Activated CD4-positive, alpha-beta memory T cell treated with anti-CD3 and anti-CD28 coated beads for 36 hours (primary cell): ENCODE measurements at regions of chr9 and their contacts with region 1.

Region 1: DNA sequence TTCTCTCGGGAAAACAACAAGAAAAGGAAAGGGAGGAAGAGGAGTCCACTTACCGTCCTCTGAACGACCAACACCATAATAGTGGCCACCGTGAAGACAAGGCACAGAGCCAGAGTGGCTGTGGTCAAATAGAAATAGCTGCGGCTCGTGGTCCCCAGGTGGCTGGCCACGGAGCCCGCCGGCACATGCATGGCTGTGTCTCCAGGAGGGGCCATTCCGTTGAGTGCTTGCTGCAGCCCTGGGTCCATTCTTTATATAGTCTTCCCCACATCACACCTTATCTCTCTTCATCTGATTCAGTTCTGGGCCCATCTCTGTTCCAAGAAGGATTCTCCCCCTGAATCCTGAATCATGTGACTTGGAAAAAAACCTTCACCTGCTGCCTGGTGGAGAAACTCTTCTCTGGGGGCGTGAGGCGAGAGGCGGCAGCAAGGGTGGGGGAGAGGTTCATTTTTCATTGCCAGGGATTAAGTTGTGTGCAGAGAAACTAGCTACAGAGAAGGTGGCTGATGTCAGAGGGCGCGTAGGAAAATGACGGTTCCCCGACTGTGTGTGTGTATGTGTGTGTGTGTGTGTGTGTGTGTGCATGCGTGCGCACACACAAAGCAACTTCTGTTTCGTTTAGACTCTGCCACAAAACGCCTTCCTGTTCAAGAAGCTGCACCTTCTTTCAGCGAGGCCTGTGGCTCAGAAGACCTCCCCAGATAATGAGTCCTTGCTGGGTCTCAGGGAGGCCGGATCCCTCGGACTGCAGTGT is at the start of gene TNFSF8:
- DNase-seq: peak; percentile 90
- H3K4me3 Mint-ChIP-seq: peak within 1 kb of the TSS; percentile 94
- H3K27ac Mint-ChIP-seq: peak within 1 kb of the TSS; percentile 97
- H3K4me1 Mint-ChIP-seq: peaks cover 44% of the 10 kb centered on the region
- H3K27me3 Mint-ChIP-seq: no peaks in the 10 kb centered on the region
- total RNA-seq, gene TNFSF8: 37.9 to 38.7 TPM

Region 2: DNA sequence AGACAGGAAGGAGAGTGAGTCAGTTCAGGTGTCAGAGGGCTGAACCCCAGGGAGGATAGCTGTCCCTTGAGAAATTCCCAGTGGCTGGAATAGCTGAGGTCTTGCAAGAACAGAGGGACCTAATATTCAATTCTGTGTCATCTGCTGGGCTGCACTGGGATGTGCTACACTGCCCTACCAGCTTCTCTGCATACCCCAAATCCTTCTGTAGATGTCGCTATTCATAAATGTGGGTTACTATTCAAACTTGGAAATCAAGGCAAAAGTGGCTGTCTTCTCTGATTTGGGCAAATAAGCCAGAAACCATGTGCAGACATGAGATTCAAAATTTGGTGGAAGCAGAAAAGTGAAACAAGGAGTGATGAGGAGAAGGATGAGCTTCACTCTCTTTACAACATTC is 16.1 kb before region 1 on chr9:
- CTCF ChIA-PET with region 1: interaction called, 20 read pairs
- POLR2A ChIA-PET with region 1: interaction called, 46 read pairs
- intact Hi-C with region 1: loop called (anchors 1 kb)
- DNase-seq: no peak
- H3K4me3 Mint-ChIP-seq: no peak overlapping the region
- H3K27ac Mint-ChIP-seq: peak overlapping the region; percentile 44
- H3K4me1 Mint-ChIP-seq: peaks cover 87% of the 10 kb centered on the region
- H3K27me3 Mint-ChIP-seq: no peaks in the 10 kb centered on the region

Region 3: GRCh38 chr9:114919611-114920010 is 10.6 kb before region 1 on chr9:
- CTCF ChIA-PET with region 1: interaction called, 7 read pairs
- POLR2A ChIA-PET with region 1: interaction called, 46 read pairs
- intact Hi-C with region 1: loop called (anchors 1 kb)
- DNase-seq: peak; percentile 68
- H3K4me3 Mint-ChIP-seq: peak overlapping the region; percentile 10
- H3K27ac Mint-ChIP-seq: peak overlapping the region; percentile 76
- H3K4me1 Mint-ChIP-seq: peaks cover 93% of the 10 kb centered on the region
- H3K27me3 Mint-ChIP-seq: no peaks in the 10 kb centered on the region

Region 4: GRCh38 chr9:114953917-114954316 is 23.7 kb after region 1 on chr9:
- CTCF ChIA-PET with region 1: interaction called, 3 read pairs
- POLR2A ChIA-PET with region 1: interaction called, 6 read pairs
- intact Hi-C with region 1: loop called (anchors 1 kb)
- DNase-seq: peak; percentile 48
- H3K4me3 Mint-ChIP-seq: no peak overlapping the region
- H3K27ac Mint-ChIP-seq: no peak overlapping the region
- H3K4me1 Mint-ChIP-seq: peaks cover 35% of the 10 kb centered on the region
- H3K27me3 Mint-ChIP-seq: no peaks in the 10 kb centered on the region

Region 5: GRCh38 chr9:115000217-115000639 is 70.0 kb after region 1 on chr9:
- CTCF ChIA-PET with region 1: interaction called, 4 read pairs
- POLR2A ChIA-PET with region 1: interaction called, 78 read pairs
- intact Hi-C with region 1: loop called (anchors 1 kb)
- DNase-seq: peak; percentile 71
- H3K4me3 Mint-ChIP-seq: peak overlapping the region; percentile 72
- H3K27ac Mint-ChIP-seq: peak overlapping the region; percentile 85
- H3K4me1 Mint-ChIP-seq: peaks cover 73% of the 10 kb centered on the region
- H3K27me3 Mint-ChIP-seq: no peaks in the 10 kb centered on the region

Region 6: DNA sequence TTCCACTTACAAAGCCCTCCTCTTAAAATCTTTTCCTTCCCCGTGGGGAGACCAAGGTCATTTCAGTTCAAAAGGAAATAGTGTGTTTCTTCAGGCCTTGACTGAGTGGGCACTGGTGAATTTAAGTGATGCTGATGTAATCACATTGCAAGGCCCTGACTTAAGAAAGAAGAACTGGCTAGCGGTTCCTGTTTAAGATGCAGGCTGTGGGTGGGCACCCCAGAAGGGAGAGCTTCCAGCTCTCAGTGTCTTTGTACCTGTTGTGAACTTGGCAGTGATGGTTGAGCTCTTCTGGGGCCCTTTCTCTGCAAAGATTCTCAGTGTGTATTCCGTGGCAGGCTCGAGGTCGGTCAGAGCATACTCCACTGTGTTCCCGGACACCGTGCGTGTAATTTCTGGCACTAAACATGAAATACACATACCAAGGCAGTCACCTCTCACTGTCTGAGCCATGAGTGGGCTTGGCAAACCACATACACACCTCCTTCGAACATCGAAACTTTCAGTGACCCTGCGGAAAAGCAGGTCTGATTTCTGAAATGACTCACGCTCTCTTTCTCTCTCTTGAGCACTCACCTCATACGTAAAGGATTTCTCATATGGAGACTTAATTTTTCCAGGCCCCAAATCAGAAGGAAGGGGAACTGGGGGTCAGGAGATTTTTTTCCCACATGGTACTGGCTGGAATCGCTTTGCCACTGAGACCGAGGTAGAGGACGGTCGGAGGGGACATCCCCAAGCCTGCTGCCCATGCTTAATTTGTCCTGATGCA is 105.8 kb after region 1 on chr9:
- CTCF ChIA-PET with region 1: no interaction called
- POLR2A ChIA-PET with region 1: no interaction called
- intact Hi-C with region 1: loop called (anchors 1 kb)
- DNase-seq: peak; percentile 83
- H3K4me3 Mint-ChIP-seq: peak overlapping the region; percentile 62
- H3K27ac Mint-ChIP-seq: peak overlapping the region; percentile 91
- H3K4me1 Mint-ChIP-seq: peaks cover 33% of the 10 kb centered on the region
- H3K27me3 Mint-ChIP-seq: no peaks in the 10 kb centered on the region